ENCODE measurements at regions of chr2 and their contacts with region 1.

Region 1: GRCh38 chr2:173075781-173076580 is at the start of gene MAP3K20:
- DNase-seq: peak; percentile 60
- H3K4me3 Mint-ChIP-seq: peak within 1 kb of the TSS; percentile 86
- H3K27ac Mint-ChIP-seq: peak within 1 kb of the TSS; percentile 77
- H3K4me1 Mint-ChIP-seq: peaks cover 29% of the 10 kb centered on the region
- H3K27me3 Mint-ChIP-seq: peaks cover 19% of the 10 kb centered on the region
- total RNA-seq, gene MAP3K20: 17.7 and 21.8 TPM in 2 replicates

Region 2: GRCh38 chr2:172790404-172790803 is 285.6 kb before region 1 on chr2:
- intact Hi-C with region 1: no loop called
- DNase-seq: no peak
- H3K4me3 Mint-ChIP-seq: no peak overlapping the region
- H3K27ac Mint-ChIP-seq: no peak overlapping the region
- H3K4me1 Mint-ChIP-seq: no peaks in the 10 kb centered on the region
- H3K27me3 Mint-ChIP-seq: peaks cover 2% of the 10 kb centered on the region

Region 3: GRCh38 chr2:172972005-172972619 is 103.9 kb before region 1 on chr2:
- intact Hi-C with region 1: no loop called
- DNase-seq: no peak
- H3K4me3 Mint-ChIP-seq: no peak overlapping the region
- H3K27ac Mint-ChIP-seq: no peak overlapping the region
- H3K4me1 Mint-ChIP-seq: peaks cover 16% of the 10 kb centered on the region
- H3K27me3 Mint-ChIP-seq: peaks cover 12% of the 10 kb centered on the region

Region 4: DNA sequence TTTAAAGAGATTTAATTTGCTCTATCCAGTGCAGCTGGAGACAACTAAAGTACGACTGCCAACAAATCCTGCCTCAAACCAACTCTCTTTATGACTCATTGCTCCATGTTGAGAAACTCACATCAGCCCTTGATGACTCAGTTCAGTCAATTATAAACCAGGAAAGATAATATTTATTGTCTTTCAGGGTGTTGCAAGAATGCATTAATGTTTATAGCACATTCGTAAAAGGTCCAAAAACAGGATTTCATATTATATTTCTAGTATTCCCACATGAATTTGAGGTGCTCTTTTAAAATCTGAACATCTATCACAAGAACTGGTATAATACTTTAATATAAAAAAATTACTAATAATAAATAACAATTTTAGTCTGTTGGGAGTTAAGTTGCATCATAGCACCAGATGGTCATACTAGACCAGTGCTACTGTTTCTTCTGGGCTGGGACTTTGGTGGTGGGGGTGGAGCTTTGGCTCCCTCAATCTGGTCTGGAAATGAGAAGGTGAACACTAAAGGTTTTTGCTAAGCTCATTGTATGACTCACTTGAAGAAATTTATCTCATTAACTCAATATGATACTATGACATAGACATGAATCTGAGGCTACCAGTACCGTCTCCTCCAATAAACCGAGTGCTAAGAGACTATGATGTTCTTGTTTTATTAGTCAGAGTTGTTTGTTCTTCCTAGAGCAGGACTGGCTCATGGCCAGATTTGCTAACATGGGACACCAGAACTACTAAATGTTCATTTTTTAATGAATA is 26.9 kb before region 1 on chr2:
- intact Hi-C with region 1: loop called (anchors 2 kb)
- DNase-seq: no peak
- H3K4me3 Mint-ChIP-seq: no peak overlapping the region
- H3K27ac Mint-ChIP-seq: peak overlapping the region; percentile 59
- H3K4me1 Mint-ChIP-seq: peaks cover 18% of the 10 kb centered on the region
- H3K27me3 Mint-ChIP-seq: peaks cover 19% of the 10 kb centered on the region

Region 5: DNA sequence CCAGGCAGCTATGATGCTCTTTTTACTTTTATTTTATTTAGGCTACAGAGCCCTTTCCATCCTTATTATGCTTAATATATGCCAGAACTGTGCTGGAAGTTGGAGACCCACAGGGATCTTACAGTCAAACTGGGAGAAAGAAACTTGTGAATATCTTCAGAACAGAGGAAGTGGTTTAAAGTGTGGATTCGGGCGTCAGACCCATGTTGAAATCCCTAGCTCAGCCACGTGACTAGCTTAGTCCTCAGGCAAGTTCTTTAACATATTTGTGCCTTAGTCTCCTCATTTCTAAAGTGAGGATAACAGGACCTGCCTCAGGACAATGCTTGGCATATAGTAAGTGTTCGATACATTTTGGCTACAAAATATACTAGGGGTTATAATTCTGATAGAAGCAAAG is 58.7 kb after region 1 on chr2:
- intact Hi-C with region 1: loop called (anchors 1 kb)
- DNase-seq: no peak
- H3K4me3 Mint-ChIP-seq: peak overlapping the region; percentile 58
- H3K27ac Mint-ChIP-seq: peak overlapping the region; percentile 76
- H3K4me1 Mint-ChIP-seq: peaks cover 76% of the 10 kb centered on the region
- H3K27me3 Mint-ChIP-seq: peaks cover 21% of the 10 kb centered on the region

Region 6: GRCh38 chr2:173199294-173199693 is 123.3 kb after region 1 on chr2:
- intact Hi-C with region 1: no loop called
- DNase-seq: no peak
- H3K4me3 Mint-ChIP-seq: no peak overlapping the region
- H3K27ac Mint-ChIP-seq: no peak overlapping the region
- H3K4me1 Mint-ChIP-seq: no peaks in the 10 kb centered on the region
- H3K27me3 Mint-ChIP-seq: no peaks in the 10 kb centered on the region

Region 7: GRCh38 chr2:173210270-173211196 is 134.6 kb after region 1 on chr2:
- intact Hi-C with region 1: loop called (anchors 1 kb)
- DNase-seq: peak; percentile 41
- H3K4me3 Mint-ChIP-seq: no peak overlapping the region
- H3K27ac Mint-ChIP-seq: no peak overlapping the region
- H3K4me1 Mint-ChIP-seq: peaks cover 6% of the 10 kb centered on the region
- H3K27me3 Mint-ChIP-seq: no peaks in the 10 kb centered on the region

Region 8: DNA sequence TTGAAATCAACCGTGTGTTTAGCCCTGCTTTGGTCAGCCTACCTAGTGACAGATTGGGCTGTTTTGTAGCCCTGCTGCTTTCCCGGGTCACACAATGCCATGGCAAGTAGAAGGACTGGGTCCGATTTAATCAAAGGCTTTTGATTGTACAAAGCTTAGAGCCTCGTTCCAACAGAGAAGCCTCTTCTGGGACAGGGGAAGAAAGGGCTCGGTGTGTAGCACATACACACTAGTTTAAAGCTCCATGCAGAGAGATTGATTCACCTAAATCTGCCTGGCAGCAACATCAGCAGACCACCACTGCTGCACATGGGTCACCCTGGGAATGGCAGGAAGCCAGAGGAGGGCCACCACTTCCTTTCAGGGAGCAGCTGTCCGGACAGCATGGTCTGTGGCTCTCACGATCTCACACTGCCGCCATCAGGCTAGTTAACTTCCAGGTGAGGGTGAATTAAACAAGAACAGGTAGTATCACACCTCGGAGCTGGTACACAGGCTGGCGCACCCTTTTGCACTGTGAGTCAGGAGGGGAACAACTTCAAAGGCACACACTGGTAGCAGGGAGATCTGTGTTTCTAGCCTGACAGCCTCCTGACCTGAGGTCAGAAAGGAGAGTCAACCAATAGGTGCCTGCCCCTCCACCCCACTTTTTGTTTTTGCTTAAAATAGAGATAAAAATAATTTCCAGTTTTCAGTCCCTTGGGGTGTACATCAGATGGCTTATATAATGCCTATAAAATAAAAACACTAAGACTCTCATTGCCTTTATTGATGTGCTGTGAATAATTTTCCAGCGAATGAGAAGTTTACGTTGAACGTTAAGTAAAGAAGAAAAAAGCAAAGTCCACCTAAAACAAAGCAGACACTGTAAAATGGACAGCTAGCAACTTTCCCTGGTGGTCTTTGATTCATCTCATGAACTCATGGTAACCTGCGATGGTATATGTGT is 387.2 kb after region 1 on chr2:
- intact Hi-C with region 1: no loop called
- DNase-seq: no peak
- H3K4me3 Mint-ChIP-seq: no peak overlapping the region
- H3K27ac Mint-ChIP-seq: no peak overlapping the region
- H3K4me1 Mint-ChIP-seq: no peaks in the 10 kb centered on the region
- H3K27me3 Mint-ChIP-seq: peaks cover 10% of the 10 kb centered on the region

Region 9: DNA sequence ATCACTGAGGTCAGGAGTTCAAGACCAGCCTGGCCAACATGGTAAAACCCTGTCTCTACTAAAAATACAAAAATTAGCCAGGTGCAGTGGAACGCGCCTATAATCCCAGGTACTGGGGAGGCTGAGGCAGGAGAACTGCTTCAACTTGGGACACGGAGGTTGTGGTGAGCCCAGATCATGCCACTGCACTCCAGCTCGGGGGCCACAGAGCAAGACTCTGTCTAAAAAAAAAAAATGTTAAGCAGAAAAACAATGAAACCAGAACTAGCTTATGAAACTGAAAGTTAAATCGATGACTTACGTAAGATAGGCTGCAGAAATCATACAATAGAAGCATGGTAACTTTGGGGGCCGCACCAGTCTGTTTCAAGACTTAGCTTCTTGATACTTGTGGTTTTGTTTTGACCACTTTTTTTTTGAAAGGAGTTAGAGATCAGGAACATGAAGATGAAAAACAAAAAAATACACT is 1417.0 kb after region 1 on chr2:
- intact Hi-C with region 1: loop called (anchors 10 kb)
- DNase-seq: peak; percentile 58
- H3K4me3 Mint-ChIP-seq: peak overlapping the region; percentile 76
- H3K27ac Mint-ChIP-seq: peak overlapping the region; percentile 92
- H3K4me1 Mint-ChIP-seq: peaks cover 76% of the 10 kb centered on the region
- H3K27me3 Mint-ChIP-seq: no peaks in the 10 kb centered on the region

Measured in activated T-helper 1 cell treated with anti-CD3 and anti-CD28 coated beads, Interleukin-12 subunit alpha, Interleukin-12 subunit beta, Interleukin-2, Interleukin-4 antibody, amounts not matched to agents 30 ng/mL and 10 ng/mL and 1 ng/mL, durations not matched to agents 14 hours and 24 hours and 36 hours (primary cell).